CD4-positive, alpha-beta T cell (primary cell): ENCODE measurements at regions of chr1 and their contacts with region 1.

Region 1: DNA sequence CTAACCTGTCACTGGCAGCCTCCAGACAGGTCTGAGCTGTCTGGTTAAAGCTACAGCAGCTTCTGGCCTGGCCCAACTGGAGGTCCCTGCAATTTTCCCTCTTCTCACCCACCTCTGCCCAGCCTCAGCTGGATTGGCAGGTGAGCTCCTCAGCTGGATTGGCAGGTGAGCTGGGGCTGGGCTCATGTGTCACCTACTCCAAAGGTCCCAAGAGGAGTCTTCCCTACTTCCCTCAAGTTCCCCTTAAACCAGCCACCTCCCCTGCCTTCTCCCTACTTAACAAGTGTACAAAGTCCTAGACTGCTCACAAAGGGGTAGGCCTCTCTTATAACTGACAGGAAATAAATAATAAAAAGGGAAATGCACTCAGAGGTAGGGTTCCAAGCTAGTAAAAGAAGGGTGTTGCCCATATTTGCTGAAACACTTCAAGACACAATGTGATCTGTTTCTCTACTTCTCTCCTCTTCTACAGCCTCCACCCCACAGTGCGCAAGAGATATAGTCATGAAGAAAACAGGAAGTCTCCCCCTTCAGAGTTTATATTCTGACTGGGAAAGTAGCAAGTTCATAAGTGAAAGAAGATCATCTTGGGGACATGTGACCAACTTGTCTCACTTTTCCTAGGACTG is at the start of gene GPA33:
- DNase-seq: peak in 11 of 14 experiments; percentile 11 to 84 (median 40)
- ATAC-seq: peak; percentile 97
- H3K4me3 ChIP-seq: peak within 1 kb of the TSS; percentile 48
- H3K4me3 Mint-ChIP-seq: peak within 1 kb of the TSS; percentile 84
- H3K27ac ChIP-seq: peak within 1 kb of the TSS; percentile 82 to 90
- H3K27ac Mint-ChIP-seq: peak within 1 kb of the TSS; percentile 98
- H3K4me1 ChIP-seq: peaks cover 41% of the 10 kb centered on the region
- H3K4me1 Mint-ChIP-seq: peaks cover 72% of the 10 kb centered on the region
- H3K27me3 ChIP-seq: no peaks in the 10 kb centered on the region
- H3K27me3 Mint-ChIP-seq: no peaks in the 10 kb centered on the region
- CTCF ChIP-seq: no peak
- total RNA-seq, gene GPA33: 4.8 to 5.0 TPM

Region 2: GRCh38 chr1:167077128-167077867 is 13.1 kb before region 1 on chr1:
- CTCF ChIA-PET with region 1: no interaction called
- POLR2A ChIA-PET with region 1: interaction called, 12 read pairs
- intact Hi-C with region 1: no loop called
- DNase-seq: no peak
- ATAC-seq: no peak
- H3K4me3 ChIP-seq: no peak overlapping the region
- H3K4me3 Mint-ChIP-seq: no peak overlapping the region
- H3K27ac ChIP-seq: no peak overlapping the region
- H3K27ac Mint-ChIP-seq: no peak overlapping the region
- H3K4me1 ChIP-seq: peaks cover 21% of the 10 kb centered on the region
- H3K4me1 Mint-ChIP-seq: peaks cover 17% of the 10 kb centered on the region
- H3K27me3 ChIP-seq: no peaks in the 10 kb centered on the region
- H3K27me3 Mint-ChIP-seq: no peaks in the 10 kb centered on the region
- CTCF ChIP-seq: no peak

Region 3: GRCh38 chr1:167104256-167104633 is 13.8 kb after region 1 on chr1:
- CTCF ChIA-PET with region 1: interaction called, 4 read pairs
- POLR2A ChIA-PET with region 1: interaction called, 10 read pairs
- intact Hi-C with region 1: no loop called
- DNase-seq: peak in 2 of 14 experiments; percentile 14 to 17
- ATAC-seq: no peak
- H3K4me3 ChIP-seq: no peak overlapping the region
- H3K4me3 Mint-ChIP-seq: peak overlapping the region; percentile 43
- H3K27ac ChIP-seq: no peak overlapping the region
- H3K27ac Mint-ChIP-seq: peak overlapping the region; percentile 37
- H3K4me1 ChIP-seq: peaks cover 17% of the 10 kb centered on the region
- H3K4me1 Mint-ChIP-seq: peaks cover 46% of the 10 kb centered on the region
- H3K27me3 ChIP-seq: no peaks in the 10 kb centered on the region
- H3K27me3 Mint-ChIP-seq: no peaks in the 10 kb centered on the region
- CTCF ChIP-seq: no peak

Region 4: DNA sequence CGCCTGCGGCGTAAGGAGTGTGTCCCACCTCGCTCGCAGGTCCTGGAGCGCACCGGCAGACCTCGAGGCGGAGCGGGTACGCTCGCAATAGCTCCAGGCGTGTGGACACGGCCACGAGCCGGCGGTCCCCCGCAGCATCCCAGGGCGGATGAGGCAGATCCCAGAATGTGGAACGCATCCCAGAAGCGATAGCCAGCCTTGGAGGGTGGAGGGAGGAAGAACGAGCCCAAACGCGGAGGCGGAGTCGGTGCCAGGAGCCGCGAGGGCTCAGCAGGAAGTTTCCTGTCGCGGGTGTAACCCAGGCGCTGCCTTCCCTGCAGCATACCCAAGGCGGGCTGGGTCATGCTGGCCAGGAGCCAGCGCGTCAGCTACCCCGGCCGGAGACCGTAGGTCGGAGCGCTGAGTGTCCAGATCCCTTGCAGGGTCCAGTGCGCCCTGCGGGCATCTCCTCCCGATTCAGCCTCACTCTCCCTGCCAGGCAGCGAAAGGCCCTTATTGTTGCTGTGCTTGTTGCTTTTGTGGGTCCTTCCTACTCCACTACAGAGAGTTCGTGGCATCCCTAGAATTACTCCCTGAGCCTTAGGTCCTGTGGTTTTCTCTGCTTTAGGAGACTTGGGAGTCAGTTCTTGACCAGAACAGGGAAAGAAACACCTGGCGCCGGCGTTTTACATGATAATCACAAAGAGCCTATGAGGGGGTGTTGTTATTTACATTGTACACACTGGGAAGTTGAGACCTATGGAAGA is 31.1 kb after region 1 on chr1:
- CTCF ChIA-PET with region 1: interaction called, 3 read pairs
- POLR2A ChIA-PET with region 1: interaction called, 7 read pairs
- intact Hi-C with region 1: loop called in 1 of 2 experiments (anchors 2 kb)
- DNase-seq: peak in 13 of 14 experiments; percentile 10 to 65 (median 32)
- ATAC-seq: peak; percentile 74
- H3K4me3 ChIP-seq: peak overlapping the region; percentile 64
- H3K4me3 Mint-ChIP-seq: peak overlapping the region; percentile 87
- H3K27ac ChIP-seq: no peak overlapping the region
- H3K27ac Mint-ChIP-seq: no peak overlapping the region
- H3K4me1 ChIP-seq: peaks cover 12% of the 10 kb centered on the region
- H3K4me1 Mint-ChIP-seq: peaks cover 12% of the 10 kb centered on the region
- H3K27me3 ChIP-seq: no peaks in the 10 kb centered on the region
- H3K27me3 Mint-ChIP-seq: peaks cover 9% of the 10 kb centered on the region
- CTCF ChIP-seq: no peak

Region 5: GRCh38 chr1:167294528-167294927 is 204.1 kb after region 1 on chr1:
- CTCF ChIA-PET with region 1: no interaction called
- POLR2A ChIA-PET with region 1: no interaction called
- intact Hi-C with region 1: no loop called
- DNase-seq: no peak
- ATAC-seq: no peak
- H3K4me3 ChIP-seq: no peak overlapping the region
- H3K4me3 Mint-ChIP-seq: no peak overlapping the region
- H3K27ac ChIP-seq: no peak overlapping the region
- H3K27ac Mint-ChIP-seq: no peak overlapping the region
- H3K4me1 ChIP-seq: no peaks in the 10 kb centered on the region
- H3K4me1 Mint-ChIP-seq: peaks cover 32% of the 10 kb centered on the region
- H3K27me3 ChIP-seq: no peaks in the 10 kb centered on the region
- H3K27me3 Mint-ChIP-seq: no peaks in the 10 kb centered on the region
- CTCF ChIP-seq: no peak

Region 6: DNA sequence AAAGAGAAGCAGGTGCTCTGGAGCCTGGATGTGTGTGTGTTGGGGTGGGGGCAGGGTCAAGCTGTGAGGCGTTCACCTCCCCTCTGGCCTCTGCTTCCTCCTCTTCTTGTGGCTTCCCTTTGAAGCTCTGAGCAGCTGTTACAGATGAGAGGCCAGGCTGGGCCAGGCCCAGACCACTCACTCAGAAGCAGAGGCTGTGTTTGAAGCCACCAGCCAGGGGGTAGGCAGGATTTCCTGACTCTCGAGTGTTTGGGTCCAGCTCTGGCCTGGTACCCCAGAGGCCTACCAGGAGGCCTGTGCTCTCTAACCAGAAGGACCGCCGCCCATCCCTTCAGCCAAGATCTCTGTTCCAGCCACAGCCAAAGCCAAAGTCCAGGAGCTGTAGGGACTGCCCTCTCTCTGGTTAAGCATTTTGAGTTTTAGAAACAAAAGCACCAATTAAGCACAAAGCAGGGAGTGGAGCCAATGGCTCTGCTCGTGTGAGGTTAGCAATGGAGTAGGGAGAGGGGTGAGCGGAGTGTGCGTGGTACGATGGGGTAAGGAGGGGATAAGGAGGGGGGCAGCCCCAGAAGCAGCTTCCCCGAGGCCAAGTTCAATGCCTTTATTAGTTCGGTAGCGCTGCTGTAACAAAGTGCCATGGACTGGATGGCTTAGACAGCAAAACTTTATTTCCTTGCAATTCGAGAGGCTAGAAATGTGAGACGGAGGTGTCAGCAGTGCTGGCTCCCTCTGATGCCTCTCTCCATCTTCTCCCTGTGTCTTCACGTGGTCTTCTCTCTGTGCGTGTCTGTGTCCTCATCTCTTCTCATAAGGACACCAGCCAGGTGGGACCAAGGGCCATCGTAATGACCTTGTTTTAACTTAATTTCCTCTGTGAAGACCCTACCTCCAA is 560.1 kb after region 1 on chr1:
- CTCF ChIA-PET with region 1: no interaction called
- POLR2A ChIA-PET with region 1: no interaction called
- intact Hi-C with region 1: no loop called
- DNase-seq: peak in 2 of 14 experiments; percentile 20 to 30
- ATAC-seq: no peak
- H3K4me3 ChIP-seq: no peak overlapping the region
- H3K4me3 Mint-ChIP-seq: peak overlapping the region; percentile 81
- H3K27ac ChIP-seq: peak overlapping the region; percentile 28 to 57
- H3K27ac Mint-ChIP-seq: peak overlapping the region; percentile 81
- H3K4me1 ChIP-seq: peaks cover 88% of the 10 kb centered on the region
- H3K4me1 Mint-ChIP-seq: peaks cover 95% of the 10 kb centered on the region
- H3K27me3 ChIP-seq: no peaks in the 10 kb centered on the region
- H3K27me3 Mint-ChIP-seq: no peaks in the 10 kb centered on the region
- CTCF ChIP-seq: no peak